ENCODE measurements at regions of chr1 and their contacts with region 1.

Region 1: GRCh38 chr1:234499119-234499942 is 20.4 kb upstream of the TARBP1 start:
- DNase-seq: peak; percentile 82 to 90
- ATAC-seq: peak; percentile 72 to 74
- H3K4me3 ChIP-seq: peak overlapping the region; percentile 38 to 55 (median 46)
- H3K27ac ChIP-seq: peak overlapping the region; percentile 88 to 95 (median 88)
- H3K4me1 ChIP-seq: peaks cover 47 to 51% of the 10 kb centered on the region in 2 donors
- H3K27me3 ChIP-seq: no peaks in the 10 kb centered on the region
- CTCF ChIP-seq: peak; percentile 96 to 99 (median 98)
- POLR2A ChIP-seq: peak in 1 of 2 donors; percentile 8

Region 2: GRCh38 chr1:234544087-234544579 is 44.8 kb after region 1 on chr1:
- in situ Hi-C with region 1: no loop called
- intact Hi-C with region 1: loop called (anchors 2 kb)
- DNase-seq: peak; percentile 69 to 70
- ATAC-seq: peak; percentile 16 to 54
- H3K4me3 ChIP-seq: no peak overlapping the region
- H3K27ac ChIP-seq: peak overlapping the region; percentile 93 to 100 (median 98)
- H3K4me1 ChIP-seq: peaks cover 65 to 74% of the 10 kb centered on the region in 2 donors
- H3K27me3 ChIP-seq: no peaks in the 10 kb centered on the region
- CTCF ChIP-seq: no peak
- POLR2A ChIP-seq: peak in 1 of 2 donors; percentile 5

Region 3: GRCh38 chr1:234716908-234717375 is 217.6 kb after region 1 on chr1:
- in situ Hi-C with region 1: loop called in 2 of 4 experiments (anchors 5 to 10 kb)
- intact Hi-C with region 1: no loop called
- DNase-seq: peak in 1 of 2 donors; percentile 45
- ATAC-seq: peak; percentile 56 to 59
- H3K4me3 ChIP-seq: no peak overlapping the region
- H3K27ac ChIP-seq: peak overlapping the region; percentile 93 to 98 (median 96)
- H3K4me1 ChIP-seq: peaks cover 67 to 68% of the 10 kb centered on the region in 2 donors
- H3K27me3 ChIP-seq: no peaks in the 10 kb centered on the region
- CTCF ChIP-seq: no peak
- POLR2A ChIP-seq: peak in 1 of 2 donors; percentile 19

Region 4: GRCh38 chr1:234772345-234773147 is 273.2 kb after region 1 on chr1:
- in situ Hi-C with region 1: no loop called
- intact Hi-C with region 1: loop called (anchors 5 kb)
- DNase-seq: peak; percentile 90 to 92
- ATAC-seq: peak; percentile 99
- H3K4me3 ChIP-seq: no peak overlapping the region
- H3K27ac ChIP-seq: peak overlapping the region; percentile 63 to 77 (median 70)
- H3K4me1 ChIP-seq: peaks cover 13 to 18% of the 10 kb centered on the region in 2 donors
- H3K27me3 ChIP-seq: peaks cover 12 to 13% (median 13%) of the 10 kb centered on the region in 3 donors
- CTCF ChIP-seq: no peak
- POLR2A ChIP-seq: peak; percentile 43 to 66

Region 5: GRCh38 chr1:234887016-234887900 is 387.9 kb after region 1 on chr1:
- in situ Hi-C with region 1: loop called in 1 of 4 experiments (anchors 25 kb)
- intact Hi-C with region 1: loop called (anchors 1 kb)
- DNase-seq: peak; percentile 59 to 82
- ATAC-seq: peak; percentile 48 to 57
- H3K4me3 ChIP-seq: peak overlapping the region in 3 of 4 donors; percentile 3 to 42 (median 18)
- H3K27ac ChIP-seq: peak overlapping the region; percentile 90 to 100 (median 96)
- H3K4me1 ChIP-seq: peaks cover 36 to 38% of the 10 kb centered on the region in 2 donors
- H3K27me3 ChIP-seq: no peaks in the 10 kb centered on the region
- CTCF ChIP-seq: no peak
- POLR2A ChIP-seq: peak in 1 of 2 donors; percentile 25

Region 6: GRCh38 chr1:234997201-234997895 is 498.0 kb after region 1 on chr1:
- in situ Hi-C with region 1: no loop called
- intact Hi-C with region 1: loop called (anchors 2 kb)
- DNase-seq: peak; percentile 99 to 100
- ATAC-seq: peak; percentile 88 to 93
- H3K4me3 ChIP-seq: peak overlapping the region in 3 of 4 donors; percentile 12 to 24 (median 18)
- H3K27ac ChIP-seq: peak overlapping the region; percentile 93 to 99 (median 94)
- H3K4me1 ChIP-seq: peaks cover 25 to 28% of the 10 kb centered on the region in 2 donors
- H3K27me3 ChIP-seq: no peaks in the 10 kb centered on the region
- CTCF ChIP-seq: peak in 1 of 5 experiments; percentile 11
- POLR2A ChIP-seq: peak; percentile 59 to 73